H1 (cell line): ENCODE measurements at regions of chr1 and their contacts with region 1.

Region 1: GRCh38 chr1:35577071-35577998 is 4.2 kb downstream of the TFAP2E start:
- DNase-seq: peak in 1 of 2 experiments; percentile 79
- H3K4me3 ChIP-seq: peak overlapping the region; percentile 30 to 58 (median 46)
- H3K27ac ChIP-seq: no peak overlapping the region
- H3K4me1 ChIP-seq: peaks cover 7 to 20% (median 15%) of the 10 kb centered on the region in 4 experiments
- H3K27me3 ChIP-seq: peaks cover 60 to 69% (median 67%) of the 10 kb centered on the region in 4 experiments
- CTCF ChIP-seq: no peak
- EP300 ChIP-seq: no peak
- POLR2A ChIP-seq: no peak
- RAD21 ChIP-seq: no peak

Region 2: GRCh38 chr1:35668506-35668905 is 91.2 kb after region 1 on chr1:
- CTCF ChIA-PET with region 1: no interaction called
- POLR2A ChIA-PET with region 1: no interaction called
- DNase-seq: no peak
- H3K4me3 ChIP-seq: no peak overlapping the region
- H3K27ac ChIP-seq: no peak overlapping the region
- H3K4me1 ChIP-seq: peaks cover 0 to 4% (median 2%) of the 10 kb centered on the region in 4 experiments; a peak in 3 of 7 replicates
- H3K27me3 ChIP-seq: peaks cover 0 to 2% (median 0%) of the 10 kb centered on the region in 4 experiments; a peak in 1 of 7 replicates
- CTCF ChIP-seq: no peak
- EP300 ChIP-seq: no peak
- POLR2A ChIP-seq: no peak
- RAD21 ChIP-seq: no peak

Region 3: DNA sequence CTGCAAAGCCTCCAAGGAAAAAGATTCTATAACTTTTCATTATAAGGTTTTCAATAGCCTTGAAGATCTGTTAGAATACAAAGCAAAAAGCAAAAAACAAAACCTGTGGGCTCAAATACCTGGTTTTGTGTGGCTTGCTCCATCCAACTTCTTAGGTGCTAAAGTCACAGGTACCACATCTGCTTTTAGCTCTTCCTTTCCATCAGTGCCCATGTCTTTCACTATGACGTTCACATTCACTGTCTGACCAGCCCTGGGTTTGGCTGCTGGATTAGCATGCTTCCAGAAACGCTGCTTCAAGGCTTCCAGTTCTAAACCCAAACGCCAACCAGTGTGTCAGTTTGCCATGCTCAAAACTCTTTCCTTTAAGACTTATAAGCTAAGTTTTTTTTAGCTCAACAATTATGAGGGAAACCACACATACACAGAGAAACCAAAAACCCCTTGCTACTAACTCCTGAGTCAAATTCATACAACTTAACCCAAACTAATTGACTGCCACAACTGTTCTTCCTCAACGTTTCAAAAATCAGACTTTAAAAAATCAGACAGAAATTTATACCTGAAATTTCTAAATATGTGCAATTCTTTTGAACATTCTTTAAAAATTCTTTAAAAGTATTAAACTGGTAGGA is 176.4 kb after region 1 on chr1:
- CTCF ChIA-PET with region 1: no interaction called
- POLR2A ChIA-PET with region 1: no interaction called
- DNase-seq: no peak
- H3K4me3 ChIP-seq: no peak overlapping the region
- H3K27ac ChIP-seq: no peak overlapping the region
- H3K4me1 ChIP-seq: no peaks in the 10 kb centered on the region
- H3K27me3 ChIP-seq: no peaks in the 10 kb centered on the region
- CTCF ChIP-seq: no peak
- EP300 ChIP-seq: no peak
- POLR2A ChIP-seq: no peak
- RAD21 ChIP-seq: no peak

Region 4: GRCh38 chr1:35769188-35769758 is 191.9 kb after region 1 on chr1:
- CTCF ChIA-PET with region 1: no interaction called
- POLR2A ChIA-PET with region 1: interaction called, 10 read pairs
- DNase-seq: peak; percentile 73 to 91
- H3K4me3 ChIP-seq: peak overlapping the region; percentile 76 to 92 (median 80)
- H3K27ac ChIP-seq: peak overlapping the region; percentile 80
- H3K4me1 ChIP-seq: no peaks in the 10 kb centered on the region; a peak in 1 of 7 replicates
- H3K27me3 ChIP-seq: no peaks in the 10 kb centered on the region
- CTCF ChIP-seq: peak in 1 of 3 experiments; percentile 23; a peak in 1 of 4 replicates
- EP300 ChIP-seq: no peak
- POLR2A ChIP-seq: peak in 1 of 2 experiments; percentile 81; a peak in 1 of 3 replicates
- RAD21 ChIP-seq: no peak